ENCODE measurements at regions of chr11 and their contacts with region 1.

Region 1: DNA sequence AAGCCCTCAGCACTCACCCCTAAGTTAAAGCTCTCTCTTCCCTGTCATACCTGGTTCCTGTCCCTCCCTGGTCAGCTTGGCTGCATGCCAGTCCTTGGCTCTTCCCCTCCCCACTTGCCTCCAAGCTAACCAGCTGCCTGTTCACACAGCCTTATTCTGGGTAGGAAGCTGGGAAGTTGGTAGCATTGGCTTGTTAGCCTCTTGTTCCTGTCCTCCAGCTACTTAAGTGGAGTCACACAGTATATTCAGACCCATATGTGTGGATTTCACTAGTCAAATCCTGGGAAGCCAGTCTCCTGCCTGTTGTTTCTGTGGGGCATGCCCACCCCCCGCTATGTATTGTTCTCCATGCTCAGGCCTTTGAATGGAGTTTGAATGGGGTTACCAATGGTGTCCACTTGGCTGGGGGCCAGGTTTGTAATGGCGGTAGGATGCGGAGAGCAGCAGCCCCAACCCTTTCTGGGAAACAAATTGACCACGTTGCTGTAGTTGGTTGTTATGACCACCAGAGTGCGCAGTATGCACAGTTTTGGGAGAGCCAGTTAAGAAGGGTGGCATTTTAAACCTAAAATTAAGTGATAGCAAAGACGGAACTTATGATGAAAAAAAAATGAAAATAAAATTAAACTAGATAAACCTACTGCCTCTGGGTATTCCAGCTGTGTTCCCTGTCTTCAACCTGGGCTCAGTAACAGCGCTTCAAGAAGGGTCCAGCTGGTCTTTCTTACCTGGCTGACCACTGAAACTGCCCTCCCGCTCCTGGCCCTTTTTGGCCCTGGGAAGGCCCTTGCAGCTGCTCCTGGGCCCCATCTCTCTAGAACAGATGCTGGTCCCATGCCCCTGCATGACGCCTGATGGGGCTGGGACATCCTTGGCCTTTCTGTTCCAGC is 10.7 kb upstream of the RPS3 start:
- DNase-seq: peak; percentile 86
- ATAC-seq: peak; percentile 82
- H3K4me3 Mint-ChIP-seq: no peak overlapping the region
- H3K27ac Mint-ChIP-seq: no peak overlapping the region
- H3K4me1 Mint-ChIP-seq: peaks cover 8% of the 10 kb centered on the region
- H3K27me3 Mint-ChIP-seq: peaks cover 25% of the 10 kb centered on the region

Region 2: GRCh38 chr11:75063732-75064314 is 324.8 kb before region 1 on chr11:
- CTCF ChIA-PET with region 1: no interaction called
- DNase-seq: no peak
- ATAC-seq: no peak
- H3K4me3 Mint-ChIP-seq: no peak overlapping the region
- H3K27ac Mint-ChIP-seq: no peak overlapping the region
- H3K4me1 Mint-ChIP-seq: no peaks in the 10 kb centered on the region
- H3K27me3 Mint-ChIP-seq: peaks cover 41% of the 10 kb centered on the region

Region 3: DNA sequence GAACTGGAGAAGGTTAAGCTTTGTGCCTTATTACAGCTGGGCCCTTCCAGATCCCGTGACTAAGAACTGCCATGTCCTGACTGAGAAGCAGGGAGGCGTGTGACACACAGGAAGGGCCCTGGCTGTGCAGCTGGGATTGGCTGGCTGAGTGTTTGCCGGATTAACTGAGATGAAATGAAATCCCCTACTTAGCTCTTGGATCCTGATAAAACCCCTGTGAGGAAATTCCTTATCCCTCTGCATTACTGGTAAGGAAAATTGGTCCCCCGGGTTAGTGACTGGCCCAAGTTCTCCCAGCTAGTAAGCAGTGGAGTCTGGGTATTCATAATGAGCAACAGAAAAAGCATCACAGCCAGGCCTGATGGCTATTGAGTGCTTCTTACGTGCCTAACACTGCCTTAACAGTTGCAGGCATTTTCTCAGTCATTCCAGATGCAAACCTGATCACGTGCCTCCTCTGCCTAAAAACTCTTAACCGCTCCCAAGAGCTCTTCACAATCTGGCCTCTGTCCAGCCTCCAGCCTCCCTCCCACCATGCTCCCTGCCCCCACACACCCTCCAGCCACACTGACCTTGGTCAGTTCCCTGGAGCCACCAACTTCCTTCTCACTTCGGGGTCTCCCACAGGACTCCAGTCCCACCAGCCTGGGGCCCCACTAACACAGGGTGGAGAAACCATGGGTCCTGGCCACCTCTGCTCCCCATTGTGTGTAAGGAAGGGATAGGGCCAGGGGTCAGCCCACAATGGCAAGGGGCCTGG is 74.9 kb before region 1 on chr11:
- CTCF ChIA-PET with region 1: interaction called, 13 read pairs
- DNase-seq: no peak
- ATAC-seq: no peak
- H3K4me3 Mint-ChIP-seq: no peak overlapping the region
- H3K27ac Mint-ChIP-seq: no peak overlapping the region
- H3K4me1 Mint-ChIP-seq: peaks cover 11% of the 10 kb centered on the region
- H3K27me3 Mint-ChIP-seq: no peaks in the 10 kb centered on the region

Region 4: GRCh38 chr11:75342903-75343870 is 45.4 kb before region 1 on chr11:
- CTCF ChIA-PET with region 1: interaction called, 58 read pairs
- DNase-seq: no peak
- ATAC-seq: no peak
- H3K4me3 Mint-ChIP-seq: no peak overlapping the region
- H3K27ac Mint-ChIP-seq: peak overlapping the region; percentile 4
- H3K4me1 Mint-ChIP-seq: peaks cover 82% of the 10 kb centered on the region
- H3K27me3 Mint-ChIP-seq: no peaks in the 10 kb centered on the region

Region 5: DNA sequence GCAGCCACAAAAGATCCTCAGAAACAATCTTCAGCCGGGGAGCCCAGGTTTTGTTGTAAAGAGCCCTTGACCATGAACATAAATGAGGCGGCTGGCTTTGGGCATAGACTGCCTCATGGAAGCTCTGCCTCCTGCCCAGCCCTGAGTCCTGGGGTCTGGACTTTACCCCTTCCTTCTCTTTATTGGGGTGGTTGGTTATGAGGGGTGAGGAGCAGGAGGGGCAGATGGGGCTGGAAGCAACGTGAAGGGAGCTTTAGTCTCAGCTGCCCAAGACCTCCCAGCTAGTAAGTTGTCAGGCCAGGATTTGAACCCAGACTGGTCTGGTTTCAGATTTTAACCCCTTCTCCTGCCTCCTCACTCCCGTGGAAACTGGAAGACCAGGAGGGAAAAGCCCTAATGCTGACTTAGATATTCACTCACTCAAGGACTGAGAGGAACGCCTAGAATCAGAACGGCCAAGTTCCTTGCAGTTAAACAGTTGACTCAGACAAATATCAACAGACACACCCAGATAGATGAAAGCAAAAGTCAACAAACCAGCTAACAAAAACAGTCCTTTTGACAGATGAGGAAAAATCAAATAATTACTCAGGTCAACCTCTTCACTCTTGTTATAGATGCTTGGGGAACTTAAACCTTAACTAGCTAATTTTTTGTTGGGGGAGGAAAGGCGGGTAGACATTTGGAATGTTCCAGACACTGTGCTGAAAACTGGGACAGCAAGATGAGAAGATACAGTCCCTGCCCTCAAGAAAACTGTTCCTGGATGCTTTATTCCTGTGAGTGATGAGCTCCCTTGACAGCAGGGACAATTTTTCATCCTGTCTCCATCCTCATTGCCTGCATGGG is 16.5 kb before region 1 on chr11:
- CTCF ChIA-PET with region 1: interaction called, 17 read pairs
- DNase-seq: no peak
- ATAC-seq: no peak
- H3K4me3 Mint-ChIP-seq: no peak overlapping the region
- H3K27ac Mint-ChIP-seq: peak overlapping the region; percentile 47
- H3K4me1 Mint-ChIP-seq: peaks cover 38% of the 10 kb centered on the region
- H3K27me3 Mint-ChIP-seq: no peaks in the 10 kb centered on the region

Region 6: GRCh38 chr11:75408852-75409219 is 20.2 kb after region 1 on chr11:
- CTCF ChIA-PET with region 1: interaction called, 10 read pairs
- DNase-seq: no peak
- ATAC-seq: no peak
- H3K4me3 Mint-ChIP-seq: no peak overlapping the region
- H3K27ac Mint-ChIP-seq: no peak overlapping the region
- H3K4me1 Mint-ChIP-seq: peaks cover 19% of the 10 kb centered on the region
- H3K27me3 Mint-ChIP-seq: no peaks in the 10 kb centered on the region

Region 7: DNA sequence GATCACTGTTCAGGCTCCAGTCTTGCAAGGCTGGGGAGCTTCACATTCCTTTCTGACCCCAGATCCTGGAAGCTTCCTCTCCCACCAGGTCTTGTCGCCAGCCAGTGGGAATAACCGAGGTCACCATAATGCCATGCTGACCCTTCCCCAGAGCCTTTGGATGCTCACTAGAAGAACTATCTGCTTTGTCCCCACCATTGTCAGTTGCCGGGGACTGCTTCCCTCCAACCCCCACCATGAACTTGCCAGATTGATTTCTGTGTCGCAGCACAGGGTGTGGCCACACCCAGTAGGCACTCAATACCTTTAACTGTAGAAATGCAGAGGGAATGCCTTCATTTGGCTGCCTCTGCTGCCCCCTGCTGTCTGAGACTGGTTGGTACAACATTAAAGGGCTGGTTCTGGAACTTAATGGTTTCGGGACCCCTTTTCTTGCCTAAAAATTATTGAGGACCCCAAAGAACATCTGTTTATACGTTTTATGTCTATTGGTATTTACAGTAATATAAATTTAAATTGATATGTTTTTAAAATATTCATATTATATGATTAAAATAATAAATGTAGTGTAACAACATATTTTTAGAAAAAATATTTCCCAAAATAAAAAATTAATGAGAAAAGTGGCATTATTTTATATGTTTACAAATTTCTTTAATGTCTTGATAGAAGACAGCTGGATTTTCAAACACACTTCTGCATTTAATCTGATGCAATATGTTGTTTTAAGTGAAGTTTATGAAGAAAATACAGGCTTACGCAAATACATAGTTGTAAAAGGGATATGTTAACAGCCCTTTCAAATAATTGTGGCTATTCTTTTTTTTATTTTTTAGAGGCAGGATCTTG is 143.8 kb after region 1 on chr11:
- CTCF ChIA-PET with region 1: interaction called, 94 read pairs
- DNase-seq: peak; percentile 89
- ATAC-seq: peak; percentile 75
- H3K4me3 Mint-ChIP-seq: peak overlapping the region; percentile 14
- H3K27ac Mint-ChIP-seq: peak overlapping the region; percentile 76
- H3K4me1 Mint-ChIP-seq: peaks cover 59% of the 10 kb centered on the region
- H3K27me3 Mint-ChIP-seq: peaks cover 16% of the 10 kb centered on the region

Region 8: GRCh38 chr11:75577207-75577606 is 188.6 kb after region 1 on chr11:
- CTCF ChIA-PET with region 1: no interaction called
- DNase-seq: peak; percentile 56
- ATAC-seq: no peak
- H3K4me3 Mint-ChIP-seq: no peak overlapping the region
- H3K27ac Mint-ChIP-seq: no peak overlapping the region
- H3K4me1 Mint-ChIP-seq: peaks cover 21% of the 10 kb centered on the region
- H3K27me3 Mint-ChIP-seq: peaks cover 7% of the 10 kb centered on the region